Dorsolateral prefrontal cortex (tissue), 120 donors: ENCODE measurements at regions of chr1 and their contacts with region 1.

Region 1: GRCh38 chr1:28648474-28649198 is at the start of gene RNU11:
- DNase-seq: peak; percentile 57 to 91 (median 86)
- H3K4me3 ChIP-seq: peak within 1 kb of the TSS; percentile 20 to 70 (median 57)
- H3K27ac ChIP-seq: peak within 1 kb of the TSS; percentile 54 to 100 (median 97)
- H3K27me3 ChIP-seq: no peaks in the 10 kb centered on the region
- CTCF ChIP-seq: peak in 16 of 56 donors; percentile 2 to 32 (median 12)
- total RNA-seq, gene RNU11: not detected

Region 2: DNA sequence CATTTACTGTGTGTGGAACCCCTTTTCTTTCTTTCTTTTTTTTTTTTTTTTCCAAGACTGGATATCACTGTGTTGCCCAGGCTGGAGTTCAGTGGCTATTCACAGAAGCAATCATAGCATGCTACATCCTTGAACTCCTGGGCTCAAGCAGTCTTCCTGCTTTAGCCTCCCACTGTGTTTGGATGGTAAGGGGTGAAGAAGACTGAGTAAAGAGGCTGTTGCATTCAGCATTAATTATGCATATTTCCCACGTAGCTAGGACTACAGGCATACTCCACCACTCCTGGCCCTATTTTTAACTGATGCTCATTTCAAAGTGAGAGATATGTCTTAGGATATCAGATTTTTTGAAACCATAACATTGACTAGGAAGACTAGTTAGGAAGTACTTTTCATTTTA is 239.5 kb before region 1 on chr1:
- intact Hi-C with region 1: no loop called
- DNase-seq: no peak
- H3K4me3 ChIP-seq: no peak overlapping the region
- H3K27ac ChIP-seq: peak overlapping the region in 1 of 59 donors; percentile 16
- H3K27me3 ChIP-seq: no peaks in the 10 kb centered on the region
- CTCF ChIP-seq: no peak

Region 3: DNA sequence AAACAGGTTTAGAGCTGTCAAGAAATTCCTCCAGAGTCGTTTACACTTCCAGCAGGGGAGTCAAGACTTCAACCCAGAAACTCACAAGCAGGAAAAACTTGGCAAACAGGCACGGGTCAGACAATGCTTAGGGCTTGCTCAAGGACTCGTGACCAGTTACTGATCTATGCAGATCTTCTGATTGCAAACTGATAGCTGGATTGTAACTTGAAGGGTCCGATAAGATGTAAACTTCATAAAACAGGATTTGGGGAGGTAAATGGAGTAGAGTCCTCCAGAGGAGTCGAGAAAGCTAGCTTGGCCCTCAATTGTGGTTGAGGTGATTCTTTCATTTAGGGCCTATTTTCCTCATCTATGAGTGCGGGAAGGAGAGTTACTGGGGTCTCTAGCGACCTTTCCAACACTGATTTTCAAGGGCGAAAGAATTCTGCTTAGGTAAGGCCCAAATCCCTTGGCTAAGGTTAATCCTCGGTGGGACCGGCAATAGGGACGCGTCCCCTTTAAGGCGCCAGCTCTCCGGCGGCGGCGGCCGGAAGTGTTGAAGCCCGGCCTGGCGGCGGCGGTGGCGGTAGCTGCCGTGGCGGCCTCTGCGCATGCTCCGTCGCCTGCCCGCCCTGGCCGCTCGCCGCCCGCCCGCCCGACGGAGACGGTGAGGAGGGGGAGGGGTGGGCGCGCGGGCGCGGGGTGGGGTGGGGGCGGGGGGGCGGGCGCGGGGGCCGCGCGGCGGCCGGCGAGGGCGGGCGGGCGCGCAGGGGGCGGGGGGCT is 19.7 kb after region 1 on chr1 and contains the start of gene GMEB1:
- intact Hi-C with region 1: loop called (anchors 1 kb)
- DNase-seq: peak; percentile 68 to 89 (median 77)
- H3K4me3 ChIP-seq: peak within 1 kb of the TSS; percentile 67 to 100 (median 93)
- H3K27ac ChIP-seq: peak within 1 kb of the TSS; percentile 92 to 100 (median 98)
- H3K27me3 ChIP-seq: no peaks in the 10 kb centered on the region
- CTCF ChIP-seq: peak in 22 of 56 donors; percentile 6 to 45 (median 24)
- total RNA-seq, gene GMEB1: 7.1 to 15.1 (median 10.6) TPM

Region 4: GRCh38 chr1:28815533-28816185 is 167.0 kb after region 1 on chr1:
- intact Hi-C with region 1: no loop called
- DNase-seq: no peak
- H3K4me3 ChIP-seq: peak overlapping the region in 18 of 59 donors; percentile 0 to 53 (median 22)
- H3K27ac ChIP-seq: peak overlapping the region in 11 of 59 donors; percentile 10 to 67 (median 25)
- H3K27me3 ChIP-seq: peaks cover 0 to 74% (median 33%) of the 10 kb centered on the region in 45 donors
- CTCF ChIP-seq: no peak